ENCODE measurements at regions of chr7 and their contacts with region 1.

Region 1: GRCh38 chr7:1137510-1138167 is 22.4 kb downstream of the ZFAND2A start:
- DNase-seq: no peak
- H3K4me3 ChIP-seq: peak overlapping the region; percentile 63 to 94
- H3K4me3 Mint-ChIP-seq: peak overlapping the region; percentile 86 to 95 (median 92)
- H3K27ac ChIP-seq: peak overlapping the region; percentile 76
- H3K27ac Mint-ChIP-seq: peak overlapping the region; percentile 90 to 97 (median 93)
- H3K4me1 ChIP-seq: peaks cover 15% of the 10 kb centered on the region
- H3K4me1 Mint-ChIP-seq: peaks cover 10 to 26% (median 16%) of the 10 kb centered on the region in 4 donors
- H3K27me3 ChIP-seq: no peaks in the 10 kb centered on the region
- H3K27me3 Mint-ChIP-seq: no peaks in the 10 kb centered on the region

Region 2: DNA sequence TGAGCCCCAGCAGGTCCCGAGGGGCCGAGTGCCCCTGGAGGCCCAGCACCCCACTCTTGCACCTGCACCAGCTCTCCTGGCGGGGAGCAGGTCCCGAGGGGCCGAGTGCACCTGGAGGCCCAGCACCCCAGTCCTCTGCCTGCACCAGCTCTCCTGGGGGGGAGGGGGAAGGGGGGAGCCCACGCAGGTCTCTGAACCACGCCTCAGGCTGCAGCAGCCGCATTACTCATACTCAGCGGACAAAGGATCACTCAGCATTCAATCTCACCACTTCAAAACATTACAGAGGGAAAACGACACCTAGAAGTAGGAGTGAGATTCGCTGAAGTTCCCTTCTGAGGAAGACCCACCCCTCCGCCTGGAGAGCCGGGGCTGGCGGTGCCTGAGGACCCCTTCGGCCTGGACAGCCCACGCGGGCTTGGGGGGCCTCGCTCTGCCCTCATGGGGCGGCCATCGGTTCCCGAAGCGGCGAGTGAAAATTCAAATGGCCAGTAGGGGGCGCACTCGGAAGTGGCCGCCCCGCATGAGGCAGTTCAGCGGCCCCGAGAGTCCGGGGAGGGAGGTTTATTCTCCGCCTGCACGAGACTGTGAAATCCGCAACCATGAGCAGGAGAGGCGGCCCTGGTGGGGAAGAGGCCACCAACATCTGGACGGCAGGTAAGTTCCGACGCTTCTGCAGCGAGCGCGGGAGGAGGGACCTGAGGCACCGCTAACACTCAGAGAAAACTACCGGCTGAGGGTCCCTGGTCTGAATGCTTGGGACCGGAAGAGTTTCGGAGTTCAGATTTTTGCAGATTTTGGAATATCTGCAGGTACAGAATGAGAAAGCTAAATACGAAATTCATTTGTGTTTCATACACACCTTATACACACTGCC is 50.8 kb before region 1 on chr7:
- CTCF ChIA-PET with region 1: interaction called, 14 read pairs
- POLR2A ChIA-PET with region 1: no interaction called
- intact Hi-C with region 1: no loop called
- DNase-seq: peak; percentile 56 to 67 (median 59)
- H3K4me3 ChIP-seq: peak overlapping the region in 1 of 2 donors; percentile 21
- H3K4me3 Mint-ChIP-seq: peak overlapping the region; percentile 65 to 79 (median 70)
- H3K27ac ChIP-seq: no peak overlapping the region
- H3K27ac Mint-ChIP-seq: peak overlapping the region in 2 of 7 donors; percentile 36 to 47
- H3K4me1 ChIP-seq: peaks cover 10% of the 10 kb centered on the region
- H3K4me1 Mint-ChIP-seq: peaks cover 8 to 14% (median 9%) of the 10 kb centered on the region in 4 donors
- H3K27me3 ChIP-seq: no peaks in the 10 kb centered on the region
- H3K27me3 Mint-ChIP-seq: no peaks in the 10 kb centered on the region

Region 3: GRCh38 chr7:1151653-1152425 is 14.2 kb after region 1 on chr7:
- CTCF ChIA-PET with region 1: interaction called, 13 read pairs
- POLR2A ChIA-PET with region 1: interaction called, 25 read pairs
- intact Hi-C with region 1: no loop called
- DNase-seq: no peak
- H3K4me3 ChIP-seq: no peak overlapping the region
- H3K4me3 Mint-ChIP-seq: peak overlapping the region in 1 of 8 donors; percentile 48
- H3K27ac ChIP-seq: no peak overlapping the region
- H3K27ac Mint-ChIP-seq: peak overlapping the region in 2 of 7 donors; percentile 15 to 17
- H3K4me1 ChIP-seq: no peaks in the 10 kb centered on the region
- H3K4me1 Mint-ChIP-seq: no peaks in the 10 kb centered on the region
- H3K27me3 ChIP-seq: no peaks in the 10 kb centered on the region
- H3K27me3 Mint-ChIP-seq: no peaks in the 10 kb centered on the region

Region 4: GRCh38 chr7:1159891-1160668 is 22.4 kb after region 1 on chr7 and contains the start of gene ZFAND2A:
- CTCF ChIA-PET with region 1: interaction called, 4 read pairs
- POLR2A ChIA-PET with region 1: interaction called, 39 read pairs
- intact Hi-C with region 1: loop called (anchors 1 kb)
- DNase-seq: peak; percentile 97 to 98 (median 98)
- H3K4me3 ChIP-seq: peak within 1 kb of the TSS; percentile 69 to 99
- H3K4me3 Mint-ChIP-seq: peak within 1 kb of the TSS; percentile 88 to 94 (median 90)
- H3K27ac ChIP-seq: peak within 1 kb of the TSS; percentile 90
- H3K27ac Mint-ChIP-seq: peak within 1 kb of the TSS; percentile 79 to 98 (median 95)
- H3K4me1 ChIP-seq: peaks cover 29% of the 10 kb centered on the region
- H3K4me1 Mint-ChIP-seq: peaks cover 15 to 30% (median 23%) of the 10 kb centered on the region in 4 donors
- H3K27me3 ChIP-seq: no peaks in the 10 kb centered on the region
- H3K27me3 Mint-ChIP-seq: no peaks in the 10 kb centered on the region
- total RNA-seq, gene ZFAND2A: 30.9 to 32.4 TPM